Activated CD4-positive, alpha-beta memory T cell treated with anti-CD3 and anti-CD28 coated beads for 36 hours (primary cell): ENCODE measurements at regions of chr1 and their contacts with region 1.

Region 1: DNA sequence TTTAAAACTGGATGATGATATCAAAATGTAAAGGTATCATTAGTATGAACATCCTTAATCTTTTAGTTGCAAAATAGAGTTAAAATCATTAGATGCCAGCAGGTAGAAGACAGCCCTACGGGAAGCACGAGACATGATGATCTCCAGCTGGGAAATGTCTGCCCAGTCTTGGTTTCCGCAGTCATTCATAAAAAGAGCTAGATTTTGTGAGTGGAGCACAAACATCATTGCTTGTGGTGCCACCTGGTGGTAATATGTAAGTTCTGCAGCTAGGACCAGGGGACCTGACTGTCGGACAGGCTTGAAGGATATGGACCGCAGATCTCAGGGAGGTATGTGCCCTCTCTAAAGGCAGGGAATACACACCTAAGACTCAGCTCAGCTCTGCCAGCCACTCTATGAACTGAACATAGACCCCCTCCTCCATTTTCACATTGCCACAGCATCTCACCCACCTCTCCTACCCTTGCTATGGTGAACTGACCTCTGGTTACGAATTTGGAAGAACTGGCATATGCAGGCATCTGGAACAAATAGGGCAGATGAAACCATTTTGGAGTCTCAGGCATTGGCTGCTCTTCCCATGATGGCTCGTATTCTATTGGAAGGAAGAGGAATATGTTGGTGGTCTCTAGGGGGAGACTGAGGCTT is 9.2 kb downstream of the FCMR start:
- DNase-seq: peak; percentile 75
- H3K4me3 Mint-ChIP-seq: no peak overlapping the region
- H3K27ac Mint-ChIP-seq: peak overlapping the region; percentile 19
- H3K4me1 Mint-ChIP-seq: peaks cover 87% of the 10 kb centered on the region
- H3K27me3 Mint-ChIP-seq: no peaks in the 10 kb centered on the region

Region 2: DNA sequence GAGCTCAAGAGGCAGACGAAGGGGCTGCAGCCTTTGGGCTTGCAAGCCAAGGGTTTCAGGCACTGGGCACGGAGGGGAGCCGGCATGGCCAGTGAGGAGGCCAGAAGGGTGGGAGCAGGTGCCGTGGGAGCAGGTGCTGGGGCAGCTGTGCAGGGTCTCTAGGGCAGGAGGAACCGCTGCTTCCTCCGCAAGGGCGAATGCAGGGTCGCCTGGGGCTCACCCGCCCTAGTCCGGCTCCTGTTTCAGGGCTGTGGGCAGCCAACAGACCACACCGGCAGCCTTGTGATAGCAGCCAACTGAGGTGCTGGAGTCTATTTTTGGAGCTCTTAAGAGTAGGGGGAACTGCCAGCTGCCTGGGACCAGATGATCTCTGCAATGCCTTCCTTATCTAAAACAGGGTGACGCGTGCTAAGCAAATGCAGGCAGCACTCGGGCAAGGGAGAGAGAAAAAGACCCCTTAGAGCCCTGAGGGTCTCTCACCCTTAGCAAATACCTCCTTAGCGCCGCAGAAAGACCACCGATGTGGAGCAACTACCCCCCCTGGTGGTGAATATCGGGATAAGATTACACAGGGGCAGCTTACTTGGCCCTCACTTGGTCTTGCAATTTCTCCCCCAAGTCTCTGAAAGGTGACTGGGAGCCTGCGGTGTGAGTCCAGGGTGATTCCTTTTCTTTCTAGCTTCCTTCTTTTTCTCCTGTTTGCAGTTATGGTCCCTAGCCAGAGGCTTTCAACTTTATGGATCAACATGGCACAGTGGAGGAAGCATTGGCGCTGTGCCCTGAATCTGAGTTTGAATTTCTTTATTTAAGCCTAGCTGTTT is 248.5 kb before region 1 on chr1:
- CTCF ChIA-PET with region 1: interaction called, 23 read pairs
- POLR2A ChIA-PET with region 1: interaction called, 3 read pairs
- intact Hi-C with region 1: no loop called
- DNase-seq: peak; percentile 78
- H3K4me3 Mint-ChIP-seq: no peak overlapping the region
- H3K27ac Mint-ChIP-seq: no peak overlapping the region
- H3K4me1 Mint-ChIP-seq: peaks cover 38% of the 10 kb centered on the region
- H3K27me3 Mint-ChIP-seq: peaks cover 9% of the 10 kb centered on the region

Region 3: DNA sequence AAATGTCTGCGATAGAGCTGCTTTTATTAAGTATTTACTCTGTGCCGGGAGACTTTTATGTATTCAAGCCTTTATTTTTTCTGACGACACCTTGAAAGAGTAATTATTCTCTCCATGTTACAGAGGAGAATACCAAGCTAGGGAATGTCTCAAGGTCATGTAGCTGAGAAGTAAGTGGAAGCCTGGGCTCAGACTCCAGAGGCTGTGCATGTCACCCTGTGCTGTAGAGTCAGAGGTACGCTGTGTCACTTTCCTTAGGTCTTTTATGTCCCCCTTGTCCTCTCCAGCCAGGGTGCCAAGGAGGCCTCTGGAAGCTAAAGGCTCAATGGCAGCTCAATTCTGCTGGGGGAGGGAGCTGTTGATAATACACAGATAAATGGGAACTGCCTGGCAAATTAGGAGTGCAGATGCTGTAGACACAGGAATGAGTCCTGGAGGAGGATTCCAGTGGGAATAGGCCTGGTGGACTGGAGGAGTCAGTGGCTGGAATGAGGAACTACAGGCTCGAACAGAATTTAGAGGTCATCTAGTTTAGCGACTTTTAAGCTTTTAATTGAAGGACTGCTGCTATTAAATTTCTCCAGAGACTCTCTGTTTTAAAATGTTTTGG is 151.3 kb before region 1 on chr1:
- CTCF ChIA-PET with region 1: interaction called, 39 read pairs
- POLR2A ChIA-PET with region 1: interaction called, 3 read pairs
- intact Hi-C with region 1: no loop called
- DNase-seq: no peak
- H3K4me3 Mint-ChIP-seq: no peak overlapping the region
- H3K27ac Mint-ChIP-seq: no peak overlapping the region
- H3K4me1 Mint-ChIP-seq: peaks cover 30% of the 10 kb centered on the region
- H3K27me3 Mint-ChIP-seq: peaks cover 5% of the 10 kb centered on the region

Region 4: DNA sequence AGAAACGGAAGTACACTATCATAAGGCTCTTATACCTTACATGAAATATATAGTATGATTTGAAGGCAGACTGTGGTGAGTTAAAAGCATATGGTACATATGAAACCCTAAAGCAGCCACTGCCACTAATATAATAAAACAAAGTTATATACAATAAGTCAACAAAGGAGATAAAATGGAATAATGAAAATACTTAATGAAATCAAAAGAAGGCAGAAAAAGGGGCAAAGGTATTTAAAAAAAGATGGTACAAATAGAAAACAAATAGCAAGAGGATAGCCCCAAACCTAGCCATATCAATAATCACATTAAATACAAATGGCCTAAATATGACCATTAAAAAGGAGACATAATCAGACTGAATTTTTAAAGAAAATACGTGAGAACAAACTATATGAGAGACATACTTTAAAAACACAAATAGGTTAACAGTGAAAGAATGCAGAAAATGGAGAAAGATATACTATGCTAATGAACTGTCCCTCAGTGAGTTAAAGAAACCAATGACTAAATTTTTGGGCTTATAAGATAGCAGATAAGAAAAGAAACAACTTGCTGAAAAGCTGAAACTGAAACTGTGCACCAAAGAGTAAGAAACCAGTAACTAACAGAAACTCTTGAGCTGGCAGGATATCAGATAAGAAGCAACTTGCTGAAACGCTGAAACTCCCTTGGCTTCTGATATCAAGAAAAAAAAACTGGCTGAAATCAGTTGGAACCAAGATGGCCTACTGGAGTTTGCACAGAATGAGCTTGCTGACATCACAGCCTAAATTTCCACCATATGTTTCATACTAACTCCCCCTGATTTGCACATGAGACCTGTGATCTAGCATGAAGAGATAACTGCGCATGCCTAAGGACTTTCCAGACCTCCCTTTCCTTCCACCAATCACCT is 95.9 kb before region 1 on chr1:
- CTCF ChIA-PET with region 1: interaction called, 111 read pairs
- POLR2A ChIA-PET with region 1: no interaction called
- intact Hi-C with region 1: no loop called
- DNase-seq: peak; percentile 43
- H3K4me3 Mint-ChIP-seq: peak overlapping the region; percentile 20
- H3K27ac Mint-ChIP-seq: peak overlapping the region; percentile 77
- H3K4me1 Mint-ChIP-seq: peaks cover 26% of the 10 kb centered on the region
- H3K27me3 Mint-ChIP-seq: no peaks in the 10 kb centered on the region

Region 5: DNA sequence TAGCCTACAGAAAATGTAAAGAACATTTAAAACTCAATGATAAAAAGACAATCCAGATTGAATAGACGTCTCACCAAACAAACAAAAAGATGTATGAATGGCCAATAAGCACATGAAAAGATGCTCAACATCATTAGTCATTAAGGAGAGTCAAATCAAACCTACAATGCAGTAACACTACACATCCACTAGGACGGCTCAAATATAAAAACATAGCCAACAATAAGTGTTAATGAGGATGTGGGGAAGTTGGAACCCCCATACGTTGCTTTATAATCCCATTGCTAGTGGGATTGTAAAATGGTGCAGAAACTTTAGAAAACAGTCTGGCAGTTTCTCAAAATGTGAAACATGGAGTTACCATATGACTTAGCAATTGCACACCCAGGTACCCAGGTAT is 30.1 kb before region 1 on chr1:
- CTCF ChIA-PET with region 1: interaction called, 17 read pairs
- POLR2A ChIA-PET with region 1: interaction called, 3 read pairs
- intact Hi-C with region 1: no loop called
- DNase-seq: no peak
- H3K4me3 Mint-ChIP-seq: no peak overlapping the region
- H3K27ac Mint-ChIP-seq: no peak overlapping the region
- H3K4me1 Mint-ChIP-seq: peaks cover 17% of the 10 kb centered on the region
- H3K27me3 Mint-ChIP-seq: peaks cover 4% of the 10 kb centered on the region

Region 6: DNA sequence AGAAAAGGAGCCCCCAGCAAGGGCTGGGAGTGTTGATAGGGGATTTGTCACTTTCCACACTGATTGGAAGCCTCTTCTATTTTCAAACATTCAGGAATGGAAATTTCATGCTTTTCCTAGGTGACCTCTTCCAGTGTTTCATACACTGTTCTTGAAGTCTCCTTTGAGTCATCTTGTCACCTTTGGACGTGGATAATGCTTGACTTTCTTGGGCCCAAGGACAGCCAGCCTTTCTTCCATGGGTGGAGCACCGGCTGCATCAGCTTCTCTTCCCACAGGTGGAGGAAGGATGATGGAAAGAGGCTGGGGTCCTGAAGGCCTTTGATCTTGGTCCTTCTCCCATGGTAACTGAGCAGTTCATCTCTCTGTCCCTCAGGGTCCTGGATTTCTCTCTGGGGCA is 45.6 kb after region 1 on chr1:
- CTCF ChIA-PET with region 1: no interaction called
- POLR2A ChIA-PET with region 1: no interaction called
- intact Hi-C with region 1: no loop called
- DNase-seq: no peak
- H3K4me3 Mint-ChIP-seq: no peak overlapping the region
- H3K27ac Mint-ChIP-seq: no peak overlapping the region
- H3K4me1 Mint-ChIP-seq: peaks cover 24% of the 10 kb centered on the region
- H3K27me3 Mint-ChIP-seq: peaks cover 4% of the 10 kb centered on the region

Region 7: GRCh38 chr1:206982216-206982615 is 69.6 kb after region 1 on chr1:
- CTCF ChIA-PET with region 1: interaction called, 41 read pairs
- POLR2A ChIA-PET with region 1: no interaction called
- intact Hi-C with region 1: no loop called
- DNase-seq: peak; percentile 72
- H3K4me3 Mint-ChIP-seq: no peak overlapping the region
- H3K27ac Mint-ChIP-seq: no peak overlapping the region
- H3K4me1 Mint-ChIP-seq: no peaks in the 10 kb centered on the region
- H3K27me3 Mint-ChIP-seq: peaks cover 15% of the 10 kb centered on the region